HCT116 (cell line): ENCODE measurements at regions of chr4 and their contacts with region 1.

Region 1: DNA sequence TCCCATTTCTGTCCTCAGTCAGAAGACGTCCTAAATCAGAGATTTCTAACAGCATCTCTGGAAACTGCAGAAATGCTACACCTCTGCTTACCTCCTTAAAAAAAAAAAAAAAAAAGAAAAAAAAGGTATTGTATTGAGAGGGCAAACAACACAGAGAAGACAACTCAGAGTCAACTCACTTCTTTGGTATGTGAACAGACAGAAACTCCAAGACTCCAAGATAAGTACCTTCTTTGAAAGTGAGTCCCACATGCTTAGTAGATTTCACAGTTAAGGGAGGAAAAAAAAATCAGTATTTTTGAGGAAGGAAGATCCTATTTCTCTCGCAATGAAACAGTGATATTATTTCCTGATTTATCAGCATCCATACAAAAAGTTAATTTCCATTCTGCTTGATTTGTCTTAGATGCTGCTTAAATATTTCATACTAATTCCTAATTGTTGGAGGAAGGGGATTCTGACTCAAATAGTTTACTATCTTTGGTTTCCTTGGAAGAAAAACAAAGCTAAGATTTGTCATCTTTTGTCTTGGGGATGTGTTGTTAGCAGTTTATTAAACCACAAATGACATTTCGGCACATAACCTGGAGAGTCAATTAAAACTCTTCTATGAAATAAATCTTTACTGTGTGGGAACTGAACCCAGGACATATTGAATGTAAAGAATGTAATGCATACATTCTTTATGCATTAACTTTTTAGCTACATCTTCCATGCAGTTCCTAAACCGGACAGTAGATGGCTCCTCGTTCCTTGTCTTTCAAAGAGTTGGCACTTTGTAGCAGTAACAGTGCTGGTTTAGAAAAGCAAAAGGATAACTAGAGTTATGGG is 4.7 kb downstream of the RASGEF1B start:
- DNase-seq: peak; percentile 45
- ATAC-seq: no peak
- H3K4me3 ChIP-seq: no peak overlapping the region
- H3K27ac ChIP-seq: no peak overlapping the region
- H3K4me1 ChIP-seq: peaks cover 0 to 13% of the 10 kb centered on the region in 2 experiments; a peak in 2 of 4 replicates
- H3K27me3 ChIP-seq: peaks cover 45% of the 10 kb centered on the region
- CTCF ChIP-seq: peak; percentile 74 to 95 (median 84)
- POLR2A ChIP-seq: no peak
- RAD21 ChIP-seq: peak; percentile 84

Region 2: GRCh38 chr4:81844717-81845116 is 377.7 kb after region 1 on chr4:
- CTCF ChIA-PET with region 1: interaction called, 31 read pairs
- POLR2A ChIA-PET with region 1: interaction called, 4 read pairs
- RAD21 ChIA-PET with region 1: interaction called in 1 of 2 experiments, 6 read pairs
- intact Hi-C with region 1: loop called (anchors 1 kb)
- DNase-seq: peak; percentile 48
- ATAC-seq: peak; percentile 95
- H3K4me3 ChIP-seq: no peak overlapping the region
- H3K27ac ChIP-seq: no peak overlapping the region
- H3K4me1 ChIP-seq: no peaks in the 10 kb centered on the region
- H3K27me3 ChIP-seq: peaks cover 13% of the 10 kb centered on the region
- CTCF ChIP-seq: peak; percentile 58 to 83 (median 67); a peak in 4 of 6 replicates
- POLR2A ChIP-seq: no peak
- RAD21 ChIP-seq: peak; percentile 72

Region 3: GRCh38 chr4:81919238-81919637 is 452.2 kb after region 1 on chr4:
- CTCF ChIA-PET with region 1: interaction called, 6 read pairs
- POLR2A ChIA-PET with region 1: no interaction called
- RAD21 ChIA-PET with region 1: no interaction called
- intact Hi-C with region 1: loop called (anchors 2 kb)
- DNase-seq: peak; percentile 12
- ATAC-seq: peak; percentile 97
- H3K4me3 ChIP-seq: no peak overlapping the region
- H3K27ac ChIP-seq: no peak overlapping the region
- H3K4me1 ChIP-seq: no peaks in the 10 kb centered on the region
- H3K27me3 ChIP-seq: peaks cover 27% of the 10 kb centered on the region
- CTCF ChIP-seq: peak in 2 of 3 experiments; percentile 49; a peak in 4 of 6 replicates
- POLR2A ChIP-seq: no peak
- RAD21 ChIP-seq: peak; percentile 15; the same call in 1 of the 2 replicates

Region 4: GRCh38 chr4:82268050-82268825 is 801.2 kb after region 1 on chr4:
- CTCF ChIA-PET with region 1: interaction called, 11 read pairs
- POLR2A ChIA-PET with region 1: no interaction called
- RAD21 ChIA-PET with region 1: interaction called in 1 of 2 experiments, 3 read pairs
- intact Hi-C with region 1: loop called (anchors 5 kb)
- DNase-seq: peak; percentile 29
- ATAC-seq: peak; percentile 99
- H3K4me3 ChIP-seq: no peak overlapping the region
- H3K27ac ChIP-seq: no peak overlapping the region
- H3K4me1 ChIP-seq: no peaks in the 10 kb centered on the region
- H3K27me3 ChIP-seq: peaks cover 25% of the 10 kb centered on the region
- CTCF ChIP-seq: peak; percentile 53 to 85 (median 82); a peak in 5 of 6 replicates
- POLR2A ChIP-seq: no peak
- RAD21 ChIP-seq: peak; percentile 79